Activated B cell treated with CpG ODN at 0.5 μM for 24 hours (primary cell): ENCODE measurements at regions of chr17 and their contacts with region 1.

Region 1: DNA sequence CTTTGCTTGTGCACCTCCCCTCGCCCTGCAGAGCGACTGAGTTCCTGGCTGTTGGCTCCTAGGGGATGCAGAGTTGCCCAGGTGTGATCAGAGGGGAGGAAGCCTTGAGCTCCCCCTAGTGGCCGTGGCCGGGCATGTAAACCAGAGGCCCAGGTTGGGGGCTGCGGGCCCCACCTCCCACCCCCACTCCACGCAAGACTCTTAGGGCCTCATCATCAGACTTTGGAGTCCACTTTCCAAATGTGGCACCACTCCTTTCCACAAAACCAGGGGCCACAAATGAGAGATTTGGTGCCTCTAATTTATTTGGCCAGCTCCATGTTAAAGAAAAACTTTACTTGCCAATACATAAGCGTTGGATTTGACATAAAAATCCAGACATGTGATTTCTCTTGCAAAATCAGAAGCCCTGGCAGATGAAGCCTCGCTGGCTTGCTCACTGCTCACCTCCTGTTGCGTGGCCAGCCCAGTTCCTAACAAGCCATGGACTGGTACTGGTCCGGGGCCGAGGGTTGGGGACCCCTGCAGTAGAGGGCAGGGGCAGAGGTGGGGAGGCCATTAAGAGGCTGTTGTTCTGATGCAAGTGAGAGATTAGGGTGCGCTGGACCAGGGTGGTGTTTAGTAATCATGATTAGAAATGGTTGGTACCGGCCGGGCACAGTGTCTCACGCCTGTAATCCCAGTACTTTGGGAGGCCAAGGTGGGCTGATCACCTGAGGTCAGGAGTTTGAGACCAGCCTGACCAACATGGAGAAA is 28.7 kb upstream of the GAS7 start:
- DNase-seq: peak; percentile 57
- ATAC-seq: peak; percentile 79
- H3K4me3 Mint-ChIP-seq: no peak overlapping the region
- H3K27ac Mint-ChIP-seq: no peak overlapping the region
- H3K4me1 Mint-ChIP-seq: peaks cover 7% of the 10 kb centered on the region
- H3K27me3 Mint-ChIP-seq: no peaks in the 10 kb centered on the region
- CTCF ChIP-seq: no peak

Region 2: DNA sequence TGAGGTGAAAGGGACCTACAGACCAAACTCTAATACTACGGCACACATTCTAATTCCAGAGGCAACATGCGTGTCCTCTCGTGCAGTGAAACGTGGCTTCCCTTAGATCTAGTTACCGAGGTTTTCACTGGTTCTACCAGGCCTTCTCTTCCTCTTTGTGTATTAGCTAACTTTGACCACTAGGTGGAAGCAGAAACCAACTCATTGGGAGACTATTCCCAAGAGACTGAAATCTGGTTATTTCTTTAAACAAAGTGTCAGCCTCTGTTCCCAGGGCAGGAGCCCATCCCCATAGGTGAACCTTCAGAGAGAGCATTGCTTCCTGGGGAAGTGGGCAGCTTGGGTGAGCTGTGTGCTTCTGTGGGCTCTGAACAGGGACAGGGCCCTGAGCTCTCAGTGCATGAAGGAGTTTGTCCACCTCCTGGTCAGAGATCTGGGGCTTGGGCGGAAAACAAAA is 302.3 kb before region 1 on chr17:
- CTCF ChIA-PET with region 1: interaction called, 8 read pairs
- POLR2A ChIA-PET with region 1: interaction called, 4 read pairs
- intact Hi-C with region 1: loop called (anchors 1 kb)
- DNase-seq: peak; percentile 31
- ATAC-seq: peak; percentile 77
- H3K4me3 Mint-ChIP-seq: no peak overlapping the region
- H3K27ac Mint-ChIP-seq: no peak overlapping the region
- H3K4me1 Mint-ChIP-seq: peaks cover 5% of the 10 kb centered on the region
- H3K27me3 Mint-ChIP-seq: no peaks in the 10 kb centered on the region
- CTCF ChIP-seq: peak; percentile 87

Region 3: DNA sequence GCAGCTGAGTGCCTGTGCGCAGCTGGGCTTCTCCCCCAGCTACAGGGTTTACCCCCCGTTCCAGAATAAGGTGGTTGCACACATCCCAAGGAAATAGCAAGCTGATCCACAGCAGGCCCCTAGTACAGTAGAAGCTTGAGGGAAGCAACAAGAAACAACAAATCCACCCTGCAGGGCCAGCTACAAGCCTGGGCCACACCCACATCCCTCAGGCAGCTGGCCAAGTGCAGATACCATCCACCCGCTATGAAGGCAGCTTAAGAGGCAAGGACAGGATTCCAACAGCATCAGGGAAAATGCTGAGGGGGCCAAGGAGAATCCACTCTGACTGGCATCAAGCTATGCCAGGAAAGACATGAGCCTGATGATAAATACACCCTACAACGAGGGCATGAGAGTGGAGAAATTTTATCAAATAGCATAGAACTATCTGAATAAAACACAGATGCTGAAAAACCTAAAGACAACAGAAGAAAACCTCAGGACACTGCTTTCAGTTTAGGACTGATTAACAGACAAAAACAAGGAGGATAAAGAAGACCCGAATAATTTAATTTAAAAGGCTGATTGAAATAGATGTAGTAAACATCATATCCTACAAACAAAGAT is 255.0 kb before region 1 on chr17:
- CTCF ChIA-PET with region 1: interaction called, 23 read pairs
- POLR2A ChIA-PET with region 1: interaction called, 11 read pairs
- intact Hi-C with region 1: no loop called
- DNase-seq: no peak
- ATAC-seq: no peak
- H3K4me3 Mint-ChIP-seq: no peak overlapping the region
- H3K27ac Mint-ChIP-seq: no peak overlapping the region
- H3K4me1 Mint-ChIP-seq: peaks cover under 1% of the 10 kb centered on the region
- H3K27me3 Mint-ChIP-seq: no peaks in the 10 kb centered on the region
- CTCF ChIP-seq: no peak

Region 4: GRCh38 chr17:10013365-10014221 is 213.5 kb before region 1 on chr17:
- CTCF ChIA-PET with region 1: interaction called, 7 read pairs
- POLR2A ChIA-PET with region 1: no interaction called
- intact Hi-C with region 1: loop called (anchors 1 kb)
- DNase-seq: no peak
- ATAC-seq: peak; percentile 62
- H3K4me3 Mint-ChIP-seq: peak overlapping the region; percentile 35
- H3K27ac Mint-ChIP-seq: peak overlapping the region; percentile 72
- H3K4me1 Mint-ChIP-seq: peaks cover 43% of the 10 kb centered on the region
- H3K27me3 Mint-ChIP-seq: no peaks in the 10 kb centered on the region
- CTCF ChIP-seq: no peak

Region 5: GRCh38 chr17:10059369-10060211 is 167.5 kb before region 1 on chr17:
- CTCF ChIA-PET with region 1: interaction called, 3 read pairs
- POLR2A ChIA-PET with region 1: no interaction called
- intact Hi-C with region 1: loop called (anchors 1 kb)
- DNase-seq: no peak
- ATAC-seq: peak; percentile 32
- H3K4me3 Mint-ChIP-seq: peak overlapping the region; percentile 20
- H3K27ac Mint-ChIP-seq: peak overlapping the region; percentile 77
- H3K4me1 Mint-ChIP-seq: peaks cover 58% of the 10 kb centered on the region
- H3K27me3 Mint-ChIP-seq: no peaks in the 10 kb centered on the region
- CTCF ChIP-seq: no peak

Region 6: DNA sequence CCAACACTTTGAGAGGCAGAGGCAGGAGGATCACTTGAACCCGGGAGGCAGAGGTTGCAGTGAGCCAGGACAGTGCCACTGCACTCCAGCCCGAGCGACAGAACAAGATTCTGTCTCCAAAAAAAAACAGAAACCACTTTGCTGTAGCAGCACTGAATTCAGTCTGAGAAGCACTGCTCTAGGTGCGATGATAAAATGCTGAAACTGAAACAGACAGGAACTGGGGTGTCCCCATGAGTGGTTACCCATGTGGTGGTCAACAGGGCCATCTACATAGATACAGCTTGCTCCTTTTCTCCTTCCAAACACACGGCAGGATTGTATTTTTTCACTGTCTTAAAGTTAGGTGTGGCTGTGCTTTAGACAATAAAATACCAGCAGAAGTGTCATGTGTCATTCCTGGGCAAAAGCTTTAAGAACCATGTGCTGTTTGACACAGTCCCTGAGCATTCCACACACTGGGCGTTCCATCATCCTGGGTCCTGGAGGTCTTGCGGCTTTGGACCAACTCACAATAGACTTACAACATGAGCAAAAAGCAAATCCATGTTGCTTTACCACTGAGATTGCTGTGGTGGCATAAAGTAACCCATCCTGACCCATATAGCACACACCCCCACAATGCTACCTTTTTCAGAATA is 40.2 kb before region 1 on chr17:
- CTCF ChIA-PET with region 1: no interaction called
- POLR2A ChIA-PET with region 1: no interaction called
- intact Hi-C with region 1: no loop called
- DNase-seq: no peak
- ATAC-seq: no peak
- H3K4me3 Mint-ChIP-seq: no peak overlapping the region
- H3K27ac Mint-ChIP-seq: no peak overlapping the region
- H3K4me1 Mint-ChIP-seq: no peaks in the 10 kb centered on the region
- H3K27me3 Mint-ChIP-seq: no peaks in the 10 kb centered on the region
- CTCF ChIP-seq: no peak